GM12878 (cell line): ENCODE measurements at regions of chr11 and their contacts with region 1.

Region 1: DNA sequence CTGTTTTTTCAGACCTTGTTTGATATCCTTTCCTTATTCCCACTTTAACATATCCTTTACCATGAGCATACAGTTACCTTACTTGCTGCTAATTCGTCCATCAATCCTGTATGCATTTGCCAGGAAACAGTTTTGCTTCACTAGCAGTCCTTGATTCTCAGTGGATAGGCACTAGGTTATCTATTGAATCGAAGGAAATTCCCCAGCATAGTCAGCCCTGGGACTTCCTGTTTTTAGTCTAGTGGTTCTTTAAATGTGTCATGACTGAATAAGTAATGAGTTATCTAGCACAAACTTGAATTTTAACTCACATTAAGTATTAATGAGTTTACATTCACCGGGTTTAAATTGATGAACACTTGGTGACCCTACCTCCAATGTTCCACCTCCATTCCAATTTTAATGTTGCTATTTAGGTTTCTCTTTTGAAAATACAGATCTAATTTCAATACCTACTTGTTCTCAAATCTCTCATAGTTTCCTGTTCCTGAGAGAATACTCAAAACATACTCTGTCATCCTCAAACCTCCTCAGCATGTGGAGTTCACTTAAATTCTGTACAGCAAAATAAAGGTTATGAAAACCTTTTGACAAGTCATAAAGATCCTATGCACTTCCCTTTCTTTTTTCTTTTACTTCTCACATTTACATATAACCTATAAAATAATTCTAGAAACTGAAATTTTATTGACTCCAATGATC is 1375.1 kb upstream of the TENM4 start:
- DNase-seq: peak; percentile 69
- ATAC-seq: peak; percentile 88
- H3K4me3 ChIP-seq: peak overlapping the region; percentile 28; the same call in 1 of the 2 replicates
- H3K27ac ChIP-seq: peak overlapping the region; percentile 79
- H3K4me1 ChIP-seq: peaks cover 17% of the 10 kb centered on the region
- H3K27me3 ChIP-seq: no peaks in the 10 kb centered on the region
- CTCF ChIP-seq: no peak
- EP300 ChIP-seq: peak; percentile 52 to 63; a peak in 3 of 4 replicates
- POLR2A ChIP-seq: no peak
- RAD21 ChIP-seq: no peak

Region 2: DNA sequence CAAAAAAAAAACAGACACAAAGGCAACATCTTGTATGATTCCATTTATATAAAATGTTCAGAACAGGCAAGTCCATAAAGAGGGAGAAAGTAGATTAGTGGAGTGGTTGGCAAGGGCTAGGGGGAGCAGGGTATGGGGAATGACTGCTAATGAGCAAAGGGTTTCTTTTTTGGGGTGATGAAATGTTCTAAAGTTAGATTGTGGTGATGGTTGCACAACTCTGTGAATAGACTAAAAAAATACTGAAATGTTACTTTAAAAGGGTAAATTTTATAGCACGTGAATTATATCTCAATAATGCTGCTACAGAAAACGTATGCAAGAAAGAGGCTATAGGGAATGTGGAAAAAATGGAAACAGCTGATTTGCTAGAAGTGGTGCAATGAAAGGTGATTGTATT is 1530.1 kb before region 1 on chr11:
- CTCF ChIA-PET with region 1: no interaction called
- POLR2A ChIA-PET with region 1: no interaction called
- RAD21 ChIA-PET with region 1: no interaction called
- SMC1A ChIA-PET with region 1: no interaction called
- in situ Hi-C with region 1: no loop called
- intact Hi-C with region 1: no loop called
- DNase-seq: no peak
- ATAC-seq: no peak
- H3K4me3 ChIP-seq: no peak overlapping the region
- H3K27ac ChIP-seq: no peak overlapping the region
- H3K4me1 ChIP-seq: no peaks in the 10 kb centered on the region
- H3K27me3 ChIP-seq: no peaks in the 10 kb centered on the region
- CTCF ChIP-seq: no peak
- EP300 ChIP-seq: no peak
- POLR2A ChIP-seq: no peak
- RAD21 ChIP-seq: no peak

Region 3: DNA sequence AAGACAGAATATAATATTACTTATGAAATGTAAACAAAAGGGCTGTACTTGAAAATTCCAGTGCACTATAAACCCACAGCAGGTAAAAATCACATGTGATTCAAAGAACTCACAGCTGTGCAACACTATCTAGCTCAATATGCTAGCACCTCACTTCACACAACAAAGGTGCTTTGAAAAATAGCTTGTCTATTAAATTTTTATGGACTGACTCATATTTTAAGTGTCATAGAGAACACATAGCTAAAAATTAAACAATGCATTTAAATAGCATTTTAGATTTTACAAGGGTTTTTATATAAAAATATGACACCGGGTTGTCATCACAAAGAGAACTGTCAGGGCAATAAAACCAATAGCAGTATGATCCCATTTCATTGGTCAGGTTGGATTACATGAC is 15.5 kb after region 1 on chr11:
- CTCF ChIA-PET with region 1: interaction called, 6 read pairs
- POLR2A ChIA-PET with region 1: interaction called, 17 read pairs
- RAD21 ChIA-PET with region 1: interaction called, 9 read pairs
- SMC1A ChIA-PET with region 1: interaction called, 24 read pairs
- in situ Hi-C with region 1: no loop called
- intact Hi-C with region 1: no loop called
- DNase-seq: no peak
- ATAC-seq: no peak
- H3K4me3 ChIP-seq: no peak overlapping the region
- H3K27ac ChIP-seq: no peak overlapping the region
- H3K4me1 ChIP-seq: no peaks in the 10 kb centered on the region
- H3K27me3 ChIP-seq: no peaks in the 10 kb centered on the region
- CTCF ChIP-seq: no peak
- EP300 ChIP-seq: no peak
- POLR2A ChIP-seq: no peak
- RAD21 ChIP-seq: no peak

Region 4: DNA sequence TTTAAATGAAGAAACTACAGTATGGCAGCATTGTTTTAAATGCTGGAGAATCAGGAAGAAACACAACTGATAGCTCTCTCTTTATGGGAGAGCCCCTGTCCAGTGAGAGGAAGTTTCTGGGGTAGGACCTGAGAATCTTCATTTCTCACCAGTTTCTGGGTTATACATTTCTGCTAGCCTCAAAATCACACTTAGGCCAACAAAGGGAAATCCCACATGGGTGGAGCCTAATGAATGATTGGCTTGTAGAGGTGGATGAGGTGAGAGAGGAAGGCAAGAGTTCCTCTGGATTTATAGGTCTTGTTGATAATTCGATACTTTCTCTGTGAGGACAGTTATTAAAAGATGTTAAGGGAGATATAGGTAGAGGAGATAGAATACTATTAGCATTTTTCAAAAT is 22.2 kb after region 1 on chr11:
- CTCF ChIA-PET with region 1: interaction called, 7 read pairs
- POLR2A ChIA-PET with region 1: interaction called, 17 read pairs
- RAD21 ChIA-PET with region 1: interaction called, 9 read pairs
- SMC1A ChIA-PET with region 1: interaction called, 27 read pairs
- in situ Hi-C with region 1: no loop called
- intact Hi-C with region 1: no loop called
- DNase-seq: peak; percentile 31
- ATAC-seq: peak; percentile 92
- H3K4me3 ChIP-seq: no peak overlapping the region
- H3K27ac ChIP-seq: no peak overlapping the region
- H3K4me1 ChIP-seq: no peaks in the 10 kb centered on the region
- H3K27me3 ChIP-seq: no peaks in the 10 kb centered on the region
- CTCF ChIP-seq: no peak
- EP300 ChIP-seq: peak; percentile 15 to 21; a peak in 1 of 4 replicates
- POLR2A ChIP-seq: no peak
- RAD21 ChIP-seq: no peak

Region 5: DNA sequence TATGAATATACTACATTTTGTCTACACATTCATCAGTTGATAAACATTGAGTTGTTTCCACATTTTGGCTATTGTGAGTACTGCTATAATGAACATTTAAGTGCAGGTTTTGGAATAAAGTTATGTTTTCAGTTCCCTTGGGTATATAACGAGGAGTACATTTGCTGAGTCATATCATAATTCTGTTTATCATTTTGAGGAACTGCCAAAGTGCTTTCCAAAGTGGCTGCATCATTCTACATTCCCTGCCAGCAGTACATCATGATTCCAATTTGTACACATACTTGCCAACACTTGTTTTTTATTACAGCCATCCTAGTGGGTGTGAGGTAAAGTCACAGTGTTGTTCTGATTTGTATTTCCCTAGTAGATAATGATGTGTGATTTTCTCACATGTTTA is 83.5 kb after region 1 on chr11:
- CTCF ChIA-PET with region 1: interaction called, 4 read pairs
- POLR2A ChIA-PET with region 1: no interaction called
- RAD21 ChIA-PET with region 1: no interaction called
- SMC1A ChIA-PET with region 1: interaction called, 3 read pairs
- in situ Hi-C with region 1: no loop called
- intact Hi-C with region 1: loop called (anchors 5 kb)
- DNase-seq: no peak
- ATAC-seq: peak; percentile 74
- H3K4me3 ChIP-seq: no peak overlapping the region
- H3K27ac ChIP-seq: no peak overlapping the region
- H3K4me1 ChIP-seq: no peaks in the 10 kb centered on the region
- H3K27me3 ChIP-seq: no peaks in the 10 kb centered on the region
- CTCF ChIP-seq: no peak
- EP300 ChIP-seq: 0 out of 4 replicates have a peak, but pooled peaks of 1 of the 2 experiments have one; percentile 36
- POLR2A ChIP-seq: no peak
- RAD21 ChIP-seq: no peak

Region 6: DNA sequence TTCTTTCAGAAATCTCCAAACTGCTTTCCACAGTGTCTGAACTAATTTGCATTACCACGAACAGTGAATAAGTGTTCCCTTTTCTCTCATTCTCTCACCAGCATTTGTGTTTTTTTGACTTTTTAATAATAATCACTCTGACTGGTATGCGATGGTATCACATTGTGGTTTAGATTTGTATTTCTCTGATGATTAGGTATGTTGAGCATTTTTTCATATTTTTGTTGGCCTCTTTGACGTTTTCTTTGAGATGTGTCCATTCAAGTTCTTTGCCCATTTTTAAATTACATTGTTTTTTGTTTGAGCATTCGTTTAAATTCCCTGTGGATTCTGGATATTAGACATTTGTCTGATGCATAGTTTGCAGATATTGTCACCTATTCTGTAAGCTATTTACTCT is 264.6 kb after region 1 on chr11:
- CTCF ChIA-PET with region 1: no interaction called
- POLR2A ChIA-PET with region 1: no interaction called
- RAD21 ChIA-PET with region 1: no interaction called
- SMC1A ChIA-PET with region 1: no interaction called
- in situ Hi-C with region 1: no loop called
- intact Hi-C with region 1: no loop called
- DNase-seq: no peak
- ATAC-seq: no peak
- H3K4me3 ChIP-seq: no peak overlapping the region
- H3K27ac ChIP-seq: no peak overlapping the region
- H3K4me1 ChIP-seq: no peaks in the 10 kb centered on the region
- H3K27me3 ChIP-seq: no peaks in the 10 kb centered on the region
- CTCF ChIP-seq: no peak
- EP300 ChIP-seq: no peak
- POLR2A ChIP-seq: no peak
- RAD21 ChIP-seq: no peak